H1 (cell line): ENCODE measurements at regions of chr3 and their contacts with region 1.

Region 1: GRCh38 chr3:23916886-23917678 is at the starts of genes NKIRAS1 and RPL15:
- DNase-seq: peak; percentile 92 to 93
- H3K4me3 ChIP-seq: peak within 1 kb of the TSS; percentile 86 to 99 (median 92)
- H3K27ac ChIP-seq: peak within 1 kb of the TSS; percentile 96
- H3K4me1 ChIP-seq: peaks cover 5 to 8% (median 6%) of the 10 kb centered on the region in 4 experiments; a peak in 5 of 7 replicates
- H3K27me3 ChIP-seq: no peaks in the 10 kb centered on the region; a peak in 1 of 7 replicates
- CTCF ChIP-seq: peak in 1 of 3 experiments; percentile 27; a peak in 1 of 4 replicates
- EP300 ChIP-seq: no peak; a peak in 1 of 3 replicates
- POLR2A ChIP-seq: peak; percentile 99 to 100
- RAD21 ChIP-seq: no peak
- total RNA-seq, gene NKIRAS1: 7.0 and 7.6 TPM in 2 replicates
- total RNA-seq, gene RPL15: 2,767 and 2,819 TPM in 2 replicates

Region 2: DNA sequence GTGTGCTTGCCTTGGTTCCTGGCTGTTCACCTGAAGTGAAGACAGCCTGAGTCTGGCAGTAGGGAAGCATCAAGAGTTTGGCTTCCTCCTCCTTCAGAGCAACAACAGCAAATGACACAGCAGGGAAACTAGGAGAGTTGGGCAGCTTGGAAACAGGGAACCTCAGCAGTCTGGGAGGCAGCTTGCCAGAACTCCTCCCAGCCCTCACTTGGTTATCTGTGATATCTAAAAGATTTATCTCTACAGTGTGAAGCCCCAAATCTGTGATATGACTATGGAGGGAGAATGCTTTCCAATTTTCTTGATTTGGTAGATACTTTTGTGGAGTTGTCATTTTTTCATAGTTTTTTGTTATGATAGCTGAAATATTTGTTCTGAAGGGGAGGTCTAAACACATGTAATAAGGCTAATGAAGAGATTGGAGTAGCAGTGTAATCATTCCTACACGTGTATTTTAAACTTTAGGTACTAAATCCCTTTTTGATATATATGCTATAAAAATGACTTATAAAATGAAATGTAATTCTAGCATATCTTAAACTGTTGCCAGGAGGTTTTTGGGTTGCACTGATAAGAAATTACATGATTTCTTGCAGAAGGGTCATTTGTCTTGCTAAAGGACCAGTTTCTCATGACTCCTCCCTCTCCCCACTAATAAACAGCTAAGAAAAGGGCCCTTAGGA is 90.6 kb before region 1 on chr3:
- CTCF ChIA-PET with region 1: interaction called, 3 read pairs
- POLR2A ChIA-PET with region 1: interaction called, 11 read pairs
- DNase-seq: no peak
- H3K4me3 ChIP-seq: no peak overlapping the region
- H3K27ac ChIP-seq: no peak overlapping the region
- H3K4me1 ChIP-seq: peaks cover 0 to 14% (median 10%) of the 10 kb centered on the region in 4 experiments; a peak in 4 of 7 replicates
- H3K27me3 ChIP-seq: peaks cover 0 to 1% (median 0%) of the 10 kb centered on the region in 4 experiments; a peak in 1 of 7 replicates
- CTCF ChIP-seq: no peak
- EP300 ChIP-seq: no peak
- POLR2A ChIP-seq: no peak
- RAD21 ChIP-seq: no peak

Region 3: GRCh38 chr3:23859016-23859743 is 57.9 kb before region 1 on chr3:
- CTCF ChIA-PET with region 1: interaction called, 3 read pairs
- POLR2A ChIA-PET with region 1: interaction called, 11 read pairs
- DNase-seq: no peak
- H3K4me3 ChIP-seq: no peak overlapping the region
- H3K27ac ChIP-seq: no peak overlapping the region
- H3K4me1 ChIP-seq: peaks cover 0 to 11% (median 1%) of the 10 kb centered on the region in 4 experiments; a peak in 4 of 7 replicates
- H3K27me3 ChIP-seq: no peaks in the 10 kb centered on the region
- CTCF ChIP-seq: no peak
- EP300 ChIP-seq: no peak
- POLR2A ChIP-seq: no peak
- RAD21 ChIP-seq: no peak

Region 4: DNA sequence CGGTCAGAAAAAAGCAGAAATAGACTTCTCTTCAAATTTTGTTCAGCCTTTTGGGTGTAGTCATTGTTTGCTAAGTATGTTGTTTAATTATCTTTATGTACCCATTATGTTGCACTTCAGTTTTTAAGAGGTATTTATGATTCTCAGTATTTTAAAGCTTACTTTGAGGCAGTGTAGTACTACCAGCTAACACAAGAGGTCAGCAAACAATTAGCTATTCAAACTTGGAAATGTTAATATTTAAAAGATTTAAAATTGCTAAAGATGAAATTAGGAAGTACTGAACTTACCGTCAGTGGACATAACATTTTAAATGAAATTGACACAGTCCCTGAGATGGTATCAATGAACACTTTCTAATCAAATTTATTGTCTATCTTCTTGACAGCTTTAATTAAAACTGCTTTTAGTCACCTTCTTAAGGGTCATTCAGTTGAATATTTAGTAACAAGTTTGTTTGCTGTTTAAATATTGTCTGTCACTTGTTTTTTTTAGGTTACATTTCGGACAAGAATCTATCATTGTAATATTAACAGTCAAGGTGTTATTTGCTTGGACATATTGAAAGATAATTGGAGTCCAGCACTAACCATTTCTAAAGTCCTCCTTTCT is 28.4 kb before region 1 on chr3:
- CTCF ChIA-PET with region 1: interaction called, 24 read pairs
- POLR2A ChIA-PET with region 1: interaction called, 143 read pairs
- DNase-seq: no peak
- H3K4me3 ChIP-seq: no peak overlapping the region
- H3K27ac ChIP-seq: no peak overlapping the region
- H3K4me1 ChIP-seq: peaks cover 0 to 7% (median 1%) of the 10 kb centered on the region in 4 experiments; a peak in 3 of 7 replicates
- H3K27me3 ChIP-seq: no peaks in the 10 kb centered on the region
- CTCF ChIP-seq: peak in 2 of 3 experiments; percentile 5 to 53; a peak in 2 of 4 replicates
- EP300 ChIP-seq: no peak
- POLR2A ChIP-seq: no peak
- RAD21 ChIP-seq: peak in 1 of 2 experiments; percentile 64

Region 5: GRCh38 chr3:23952646-23953045 is 35.6 kb after region 1 on chr3:
- CTCF ChIA-PET with region 1: no interaction called
- POLR2A ChIA-PET with region 1: interaction called, 137 read pairs
- DNase-seq: no peak
- H3K4me3 ChIP-seq: no peak overlapping the region
- H3K27ac ChIP-seq: no peak overlapping the region
- H3K4me1 ChIP-seq: peaks cover under 1 to 5% (median 4%) of the 10 kb centered on the region in 4 experiments; a peak in 4 of 7 replicates
- H3K27me3 ChIP-seq: no peaks in the 10 kb centered on the region
- CTCF ChIP-seq: no peak
- EP300 ChIP-seq: no peak
- POLR2A ChIP-seq: no peak
- RAD21 ChIP-seq: no peak

Region 6: DNA sequence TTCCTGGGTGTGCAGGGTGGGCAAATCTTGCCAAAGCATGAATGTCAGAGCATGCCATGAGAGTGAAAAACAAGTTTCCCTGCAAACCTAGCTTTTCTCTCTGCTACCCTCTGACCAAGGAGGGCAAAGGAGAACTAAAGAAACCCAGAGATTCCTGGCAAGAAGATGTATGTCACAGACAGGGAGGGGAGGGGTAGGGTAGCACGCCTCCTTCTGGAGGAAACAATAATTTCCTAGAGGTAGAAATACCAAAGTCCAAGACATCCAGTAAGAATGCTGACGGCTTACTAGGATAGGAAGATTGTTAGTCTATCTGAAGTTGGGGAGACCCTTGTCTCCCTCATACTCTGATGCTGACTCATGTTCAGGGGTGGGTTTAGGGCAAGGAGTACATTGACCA is 231.9 kb after region 1 on chr3:
- CTCF ChIA-PET with region 1: no interaction called
- POLR2A ChIA-PET with region 1: no interaction called
- DNase-seq: no peak
- H3K4me3 ChIP-seq: no peak overlapping the region
- H3K27ac ChIP-seq: no peak overlapping the region
- H3K4me1 ChIP-seq: peaks cover 0 to 2% (median 0%) of the 10 kb centered on the region in 4 experiments; a peak in 1 of 7 replicates
- H3K27me3 ChIP-seq: no peaks in the 10 kb centered on the region
- CTCF ChIP-seq: peak in 2 of 3 experiments; percentile 58 to 68; a peak in 3 of 4 replicates
- EP300 ChIP-seq: no peak
- POLR2A ChIP-seq: no peak
- RAD21 ChIP-seq: peak; percentile 58 to 67